ENCODE measurements at regions of chr20 and their contacts with region 1.

Region 1: DNA sequence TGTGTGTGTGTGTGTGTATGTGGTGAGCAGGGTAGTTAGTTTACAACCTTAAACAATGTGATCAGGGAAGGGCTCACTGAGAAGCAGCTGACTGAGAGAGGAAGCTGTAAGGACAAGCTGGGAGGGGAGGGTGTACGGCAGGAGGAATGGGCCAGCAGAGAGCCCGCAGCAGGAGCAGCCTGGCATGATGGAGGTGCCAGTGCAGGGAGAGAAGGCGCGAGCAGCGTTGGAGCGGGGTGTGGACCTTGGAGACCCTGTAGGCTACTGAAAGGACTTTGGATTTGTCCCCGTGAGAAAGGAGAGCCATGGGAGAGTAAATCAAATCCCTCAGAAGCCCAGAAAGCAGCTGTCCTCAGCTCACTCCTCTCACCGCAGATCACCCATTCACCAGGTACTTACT is 18.5 kb downstream of the FAM209B start:
- DNase-seq: no peak
- ATAC-seq: no peak
- H3K4me3 Mint-ChIP-seq: no peak overlapping the region
- H3K27ac Mint-ChIP-seq: no peak overlapping the region
- H3K4me1 Mint-ChIP-seq: peaks cover 8% of the 10 kb centered on the region
- H3K27me3 Mint-ChIP-seq: peaks cover 3% of the 10 kb centered on the region

Region 2: DNA sequence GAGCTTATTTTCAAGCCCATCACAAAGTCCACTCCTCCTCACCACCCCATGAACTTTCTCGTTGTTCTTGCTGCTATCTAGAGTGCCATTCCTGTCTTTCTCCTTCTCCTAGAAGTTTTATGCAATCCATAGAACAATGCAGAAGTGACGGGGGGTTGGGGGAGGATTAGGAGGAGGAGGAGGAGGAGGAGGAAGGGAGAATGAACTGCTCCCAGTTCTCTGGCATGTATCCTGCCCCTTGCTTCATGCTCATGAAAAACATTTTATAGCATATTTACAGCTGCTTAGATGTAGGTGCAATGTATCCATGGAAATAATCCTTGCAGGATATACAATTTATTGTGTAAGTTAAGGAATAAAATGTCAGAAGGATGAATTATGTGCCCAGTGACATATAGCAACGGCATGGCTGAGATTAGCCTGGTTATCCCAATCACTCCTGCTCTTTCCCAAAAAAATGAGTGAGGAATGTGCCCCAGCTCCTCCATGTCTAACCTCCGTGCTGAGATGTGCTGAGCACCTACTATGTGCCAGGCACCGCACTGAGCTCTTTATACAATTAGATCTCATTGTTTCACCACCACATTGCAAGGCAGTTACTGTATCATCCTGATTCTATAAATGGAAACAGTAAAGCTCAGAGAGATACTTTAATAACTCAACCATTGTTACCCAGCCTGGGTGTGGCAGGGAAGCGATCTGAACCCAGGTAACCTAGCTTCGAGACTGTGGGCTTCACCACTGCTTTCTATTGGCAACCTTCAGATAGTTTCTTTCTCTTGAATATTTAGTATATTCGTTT is 35.9 kb after region 1 on chr20:
- CTCF ChIA-PET with region 1: no interaction called
- POLR2A ChIA-PET with region 1: no interaction called
- DNase-seq: no peak
- ATAC-seq: no peak
- H3K4me3 Mint-ChIP-seq: no peak overlapping the region
- H3K27ac Mint-ChIP-seq: no peak overlapping the region
- H3K4me1 Mint-ChIP-seq: no peaks in the 10 kb centered on the region
- H3K27me3 Mint-ChIP-seq: peaks cover 1% of the 10 kb centered on the region

Region 3: GRCh38 chr20:56995576-56996075 is 444.1 kb after region 1 on chr20:
- CTCF ChIA-PET with region 1: interaction called, 23 read pairs
- POLR2A ChIA-PET with region 1: no interaction called
- DNase-seq: peak; percentile 26
- ATAC-seq: no peak
- H3K4me3 Mint-ChIP-seq: no peak overlapping the region
- H3K27ac Mint-ChIP-seq: no peak overlapping the region
- H3K4me1 Mint-ChIP-seq: no peaks in the 10 kb centered on the region
- H3K27me3 Mint-ChIP-seq: peaks cover 2% of the 10 kb centered on the region